ENCODE measurements at regions of chr17 and their contacts with region 1.

Region 1: GRCh38 chr17:43393944-43394482 is 4.8 kb upstream of the ARL4D start:
- H3K4me3 ChIP-seq: no peak overlapping the region
- H3K27ac ChIP-seq: no peak overlapping the region
- H3K4me1 ChIP-seq: 0 out of 2 replicates have a peak, but pooled peaks cover 3% of the 10 kb centered on the region
- CTCF ChIP-seq: peak; percentile 81

Region 2: DNA sequence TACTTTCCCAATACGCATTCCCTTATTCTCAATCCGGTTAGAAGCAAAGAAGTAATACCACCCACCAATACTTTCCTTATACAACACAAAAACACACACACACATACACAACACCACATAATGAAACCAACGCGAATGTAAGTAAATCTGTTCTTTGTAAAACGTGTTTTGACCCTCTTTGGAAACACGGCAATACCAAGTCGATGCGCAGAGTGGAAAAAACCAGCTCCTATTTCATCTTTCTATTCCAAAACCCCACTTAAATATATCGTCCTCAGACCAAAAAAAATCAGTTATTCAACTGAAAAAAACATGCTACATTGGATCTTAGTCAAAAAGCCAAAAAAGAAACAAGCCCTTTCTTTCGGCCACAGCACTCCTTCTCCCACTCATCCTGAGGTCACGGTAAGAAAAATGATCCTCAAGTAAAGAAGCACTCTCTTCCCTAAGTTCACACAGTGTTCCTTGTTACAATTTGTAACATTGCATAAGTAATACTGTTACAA is 26.2 kb before region 1 on chr17:
- CTCF ChIA-PET with region 1: interaction called, 29 read pairs
- POLR2A ChIA-PET with region 1: interaction called, 130 read pairs
- H3K4me3 ChIP-seq: no peak overlapping the region
- H3K27ac ChIP-seq: peak overlapping the region; percentile 99
- H3K4me1 ChIP-seq: peaks cover 20% of the 10 kb centered on the region; the same call in 1 of the 2 replicates
- CTCF ChIP-seq: no peak

Region 3: GRCh38 chr17:43406676-43407645 is 12.9 kb after region 1 on chr17:
- CTCF ChIA-PET with region 1: interaction called, 29 read pairs
- POLR2A ChIA-PET with region 1: interaction called, 38 read pairs
- H3K4me3 ChIP-seq: no peak overlapping the region
- H3K27ac ChIP-seq: no peak overlapping the region
- H3K4me1 ChIP-seq: peaks cover 3% of the 10 kb centered on the region; the same call in 1 of the 2 replicates
- CTCF ChIP-seq: no peak

Region 4: DNA sequence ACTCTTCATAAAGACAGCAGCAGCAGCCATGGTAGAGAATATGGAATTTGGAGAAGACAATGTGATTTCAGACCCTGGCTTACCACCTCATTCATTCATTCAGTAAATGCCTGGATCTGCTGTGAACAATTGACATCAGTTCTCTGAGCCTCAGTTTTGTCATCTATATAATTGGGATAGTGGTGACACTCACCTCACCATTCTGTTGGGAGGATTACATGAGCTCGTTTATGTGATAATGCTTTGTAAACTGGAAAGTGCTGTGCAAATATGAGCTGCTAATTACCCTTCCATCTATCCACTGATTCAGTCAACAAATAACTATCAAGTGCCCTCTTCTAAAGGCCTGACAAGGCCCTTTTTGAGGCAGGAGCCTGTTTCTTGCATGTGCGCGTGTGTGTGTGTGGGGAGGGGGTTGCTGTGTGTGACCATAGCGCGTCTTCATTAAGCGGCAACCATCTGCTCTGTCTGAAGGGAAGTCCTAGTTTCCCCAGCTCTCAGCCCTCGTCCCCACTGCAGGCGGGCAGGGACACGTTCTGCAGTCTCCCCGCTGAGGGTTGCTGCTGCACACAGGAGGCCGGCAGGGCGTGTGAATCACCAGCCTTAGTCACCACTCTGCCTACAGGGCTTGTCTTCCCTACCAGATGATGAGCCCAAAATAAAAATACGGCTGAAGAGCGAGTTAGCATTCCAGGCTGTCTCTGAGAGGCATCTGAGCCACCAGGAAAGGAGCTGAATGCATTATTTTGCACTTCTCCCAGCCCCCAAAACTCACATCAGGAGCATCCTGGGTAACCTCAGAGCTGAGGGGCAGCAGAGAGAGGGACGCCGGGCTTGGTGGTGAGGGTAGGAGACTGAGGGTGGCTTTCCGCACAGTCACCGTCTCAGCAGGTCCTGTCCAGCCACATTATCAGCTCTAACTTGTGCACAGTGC is 24.7 kb after region 1 on chr17:
- CTCF ChIA-PET with region 1: interaction called, 12 read pairs
- POLR2A ChIA-PET with region 1: interaction called, 16 read pairs
- H3K4me3 ChIP-seq: no peak overlapping the region
- H3K27ac ChIP-seq: no peak overlapping the region
- H3K4me1 ChIP-seq: no peaks in the 10 kb centered on the region
- CTCF ChIP-seq: no peak

Region 5: DNA sequence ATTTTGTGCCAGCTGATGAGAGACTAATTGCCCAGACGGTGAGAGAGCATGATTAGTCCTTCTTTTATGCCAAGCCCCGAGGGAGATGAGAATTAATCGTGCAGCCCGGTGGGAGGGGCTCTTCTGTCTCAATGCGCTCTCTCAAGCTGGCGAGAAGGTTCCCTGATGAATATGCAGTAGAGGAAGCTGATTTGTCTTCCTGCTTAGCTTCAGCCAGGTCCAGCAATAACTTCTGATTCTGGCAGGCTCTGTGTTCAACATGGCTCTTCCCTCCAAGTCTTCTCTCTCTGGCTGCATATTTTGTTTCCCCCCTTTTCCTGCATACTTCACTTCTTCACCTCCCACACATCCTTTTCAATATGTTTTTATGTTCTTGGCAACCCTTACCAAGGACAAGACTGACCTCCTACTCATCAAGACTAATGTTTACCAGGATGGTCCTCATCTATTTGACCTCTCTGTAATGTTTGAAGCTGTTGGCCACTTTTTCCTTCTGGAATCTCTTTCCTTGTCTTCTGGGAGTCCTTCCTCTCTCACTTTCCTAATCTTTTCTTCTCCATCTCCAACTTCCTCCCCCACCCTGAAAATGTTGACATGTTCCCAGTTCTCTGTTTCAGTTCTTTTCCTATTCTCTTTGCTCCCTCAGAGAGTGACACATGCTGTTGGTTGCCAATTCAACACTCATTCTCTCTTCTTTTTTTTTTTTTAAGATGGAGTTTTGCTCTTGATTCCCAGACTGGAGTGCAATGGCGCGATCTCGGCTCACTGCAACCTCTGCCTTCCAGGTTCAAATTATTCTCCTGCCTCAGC is 37.9 kb after region 1 on chr17:
- CTCF ChIA-PET with region 1: interaction called, 14 read pairs
- POLR2A ChIA-PET with region 1: interaction called, 10 read pairs
- H3K4me3 ChIP-seq: no peak overlapping the region
- H3K27ac ChIP-seq: no peak overlapping the region
- H3K4me1 ChIP-seq: no peaks in the 10 kb centered on the region; the same call in 1 of the 2 replicates
- CTCF ChIP-seq: no peak

Region 6: DNA sequence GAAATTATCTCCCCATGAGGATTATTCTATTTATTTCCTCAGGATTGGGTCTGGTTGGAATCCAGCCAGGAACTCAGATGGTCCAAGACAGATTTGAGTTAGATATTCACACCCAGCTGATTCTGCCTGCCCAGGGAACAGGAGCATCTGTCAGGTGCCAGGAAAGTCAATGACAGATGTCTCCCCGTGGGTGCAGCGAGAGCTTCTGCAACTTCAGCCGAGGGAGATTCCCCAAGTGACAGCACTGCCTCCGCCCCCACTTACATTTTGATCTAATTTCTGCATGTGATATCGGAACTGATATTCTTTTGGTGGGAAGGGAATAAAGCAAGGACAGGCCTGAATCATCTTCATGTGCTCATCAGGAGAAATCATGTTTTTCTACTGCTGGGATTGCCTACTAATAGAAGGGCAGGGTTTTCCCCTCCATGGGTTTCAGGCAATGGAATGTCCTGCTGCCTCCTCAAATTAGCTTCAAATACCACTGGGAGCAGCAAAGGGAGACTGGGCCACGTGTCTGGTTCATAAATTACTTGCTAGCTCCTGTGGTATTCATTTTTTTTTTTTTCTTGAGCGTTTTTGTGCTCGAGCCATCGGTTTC is 74.1 kb after region 1 on chr17:
- CTCF ChIA-PET with region 1: interaction called, 15 read pairs
- POLR2A ChIA-PET with region 1: interaction called, 13 read pairs
- H3K4me3 ChIP-seq: no peak overlapping the region
- H3K27ac ChIP-seq: no peak overlapping the region
- H3K4me1 ChIP-seq: no peaks in the 10 kb centered on the region
- CTCF ChIP-seq: no peak

Measured in HEK293 (cell line).